ENCODE measurements at regions of chr4 and their contacts with region 1.

Region 1: DNA sequence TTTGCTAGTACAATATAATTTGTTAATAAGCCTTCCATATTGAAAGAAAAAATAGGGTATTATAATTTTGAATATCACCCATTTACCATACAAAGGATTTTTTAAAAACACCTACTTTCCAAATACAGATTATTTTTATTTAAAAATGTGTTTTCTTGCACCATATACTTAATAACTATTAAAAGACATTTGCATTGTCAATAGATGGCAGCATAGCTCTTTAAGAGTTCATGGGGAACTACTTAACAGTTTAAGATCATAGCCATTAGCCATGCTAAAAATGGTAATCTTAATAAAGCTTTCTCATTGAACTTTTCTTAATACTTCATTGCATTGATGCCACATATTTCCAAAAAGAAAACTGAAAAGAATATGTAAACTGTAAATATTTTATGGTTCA is 1995.9 kb downstream of the C4orf33 start:
- DNase-seq: peak in 1 of 2 experiments; percentile 34
- H3K4me3 ChIP-seq: no peak overlapping the region
- H3K27ac ChIP-seq: no peak overlapping the region
- H3K4me1 ChIP-seq: no peaks in the 10 kb centered on the region
- H3K27me3 ChIP-seq: no peaks in the 10 kb centered on the region
- CTCF ChIP-seq: peak; percentile 57

Region 2: GRCh38 chr4:132227151-132227856 is 1135.4 kb after region 1 on chr4:
- CTCF ChIA-PET with region 1: no interaction called
- POLR2A ChIA-PET with region 1: no interaction called
- intact Hi-C with region 1: loop called (anchors 5 kb)
- DNase-seq: peak in 1 of 2 experiments; percentile 3
- H3K4me3 ChIP-seq: peak overlapping the region; percentile 52; the same call in 1 of the 2 replicates
- H3K27ac ChIP-seq: no peak overlapping the region
- H3K4me1 ChIP-seq: no peaks in the 10 kb centered on the region
- H3K27me3 ChIP-seq: no peaks in the 10 kb centered on the region
- CTCF ChIP-seq: no peak

Region 3: GRCh38 chr4:132642016-132642817 is 1550.3 kb after region 1 on chr4:
- CTCF ChIA-PET with region 1: no interaction called
- POLR2A ChIA-PET with region 1: no interaction called
- intact Hi-C with region 1: loop called (anchors 5 kb)
- DNase-seq: peak in 1 of 2 experiments; percentile 18
- H3K4me3 ChIP-seq: no peak overlapping the region
- H3K27ac ChIP-seq: no peak overlapping the region
- H3K4me1 ChIP-seq: no peaks in the 10 kb centered on the region
- H3K27me3 ChIP-seq: no peaks in the 10 kb centered on the region
- CTCF ChIP-seq: peak; percentile 79

Measured in PC-9 (cell line).